ENCODE measurements at regions of chr5 and their contacts with region 1.

Region 1: DNA sequence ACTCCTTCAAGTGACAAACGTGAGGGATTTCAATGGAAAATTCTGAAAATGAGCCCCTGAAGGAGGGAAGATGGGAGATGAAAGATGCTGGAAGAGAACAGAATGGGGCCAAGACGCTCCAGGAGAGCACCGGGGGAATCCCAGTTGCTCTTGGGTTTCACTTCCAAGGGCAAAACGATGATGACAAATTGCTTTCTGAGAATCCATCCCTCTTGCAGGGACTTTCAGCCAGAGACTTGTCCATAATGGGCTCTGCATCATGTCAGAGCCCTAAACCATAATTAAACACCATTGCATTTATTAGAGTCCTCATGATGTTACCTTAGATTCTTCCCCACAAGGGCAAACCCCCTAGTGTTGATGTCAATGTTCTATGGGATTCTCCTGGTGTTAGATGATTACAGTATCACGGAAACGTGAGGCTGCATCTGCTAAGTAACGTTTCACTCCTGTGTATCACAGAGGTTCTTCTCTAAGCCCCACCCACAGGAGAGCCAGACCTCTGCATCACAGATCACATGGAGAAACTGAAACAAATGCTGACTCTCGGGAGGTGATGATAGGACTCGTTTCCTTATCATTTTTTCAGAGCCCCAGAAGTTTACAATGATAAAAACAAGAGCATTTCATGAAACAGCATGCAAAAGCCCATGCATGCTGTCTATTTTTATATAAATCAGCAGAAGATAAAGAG is 114.4 kb downstream of the TENT4A start:
- DNase-seq: peak; percentile 46
- H3K4me3 Mint-ChIP-seq: peak overlapping the region; percentile 76
- H3K27ac Mint-ChIP-seq: peak overlapping the region; percentile 84
- H3K4me1 Mint-ChIP-seq: peaks cover 56% of the 10 kb centered on the region
- H3K27me3 Mint-ChIP-seq: peaks cover 5% of the 10 kb centered on the region

Region 2: DNA sequence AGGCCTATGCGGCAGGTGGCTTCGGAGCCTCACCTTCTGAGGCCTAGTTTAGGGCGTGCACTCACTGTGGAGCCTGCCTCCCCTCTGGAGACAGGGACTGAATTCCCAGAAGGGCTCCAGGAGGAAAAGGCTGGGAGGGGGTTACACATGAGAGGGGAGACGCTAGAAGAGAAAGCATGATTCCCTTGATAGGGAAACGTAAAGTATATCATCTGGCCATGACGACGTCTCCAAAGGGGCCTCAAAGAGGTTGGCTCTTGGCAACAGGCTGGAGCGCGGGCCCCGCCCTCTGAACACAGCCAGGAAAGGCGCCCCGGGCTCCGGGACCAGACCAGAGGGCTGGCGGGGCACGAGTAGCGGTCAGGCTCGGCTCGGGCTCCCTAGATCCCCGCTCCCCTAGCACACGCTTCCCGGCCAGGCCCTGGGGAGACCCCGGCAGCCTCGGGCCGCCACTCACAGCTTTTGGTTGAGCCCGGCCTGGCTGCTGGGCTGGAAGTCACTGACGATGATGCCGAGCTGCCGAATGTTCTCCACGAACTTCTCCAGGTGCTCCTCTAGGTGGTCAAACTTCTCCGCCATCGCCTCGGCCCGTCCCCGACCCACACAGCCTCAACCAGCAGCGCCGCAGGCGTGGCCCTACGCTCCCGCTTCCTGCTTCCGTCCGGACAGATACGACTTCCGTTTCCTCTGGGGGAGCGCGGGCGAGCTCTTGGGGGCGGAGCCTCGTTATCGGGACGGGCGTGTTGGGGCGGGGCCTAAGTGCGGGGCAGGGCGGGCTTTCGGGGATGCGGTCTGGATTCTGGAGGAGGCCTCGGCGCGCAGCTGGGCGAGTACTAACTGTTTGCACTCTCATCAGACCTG is 449.5 kb before region 1 on chr5 and contains the start of gene MED10:
- intact Hi-C with region 1: loop called (anchors 5 kb)
- DNase-seq: peak; percentile 92
- H3K4me3 Mint-ChIP-seq: peak within 1 kb of the TSS; percentile 95
- H3K27ac Mint-ChIP-seq: peak within 1 kb of the TSS; percentile 97
- H3K4me1 Mint-ChIP-seq: peaks cover 57% of the 10 kb centered on the region
- H3K27me3 Mint-ChIP-seq: peaks cover 3% of the 10 kb centered on the region
- total RNA-seq, gene MED10: 60.2 and 67.1 TPM in 2 replicates

Region 3: GRCh38 chr5:6712577-6713275 is 114.9 kb before region 1 on chr5:
- intact Hi-C with region 1: loop called (anchors 1 kb)
- DNase-seq: peak; percentile 97
- H3K4me3 Mint-ChIP-seq: peak overlapping the region; percentile 88
- H3K27ac Mint-ChIP-seq: peak overlapping the region; percentile 95
- H3K4me1 Mint-ChIP-seq: peaks cover 41% of the 10 kb centered on the region
- H3K27me3 Mint-ChIP-seq: no peaks in the 10 kb centered on the region

Region 4: GRCh38 chr5:6849316-6850105 is 21.8 kb after region 1 on chr5:
- intact Hi-C with region 1: loop called (anchors 2 kb)
- DNase-seq: no peak
- H3K4me3 Mint-ChIP-seq: no peak overlapping the region
- H3K27ac Mint-ChIP-seq: no peak overlapping the region
- H3K4me1 Mint-ChIP-seq: peaks cover 5% of the 10 kb centered on the region
- H3K27me3 Mint-ChIP-seq: peaks cover 3% of the 10 kb centered on the region

Region 5: GRCh38 chr5:7131680-7132079 is 304.0 kb after region 1 on chr5:
- intact Hi-C with region 1: no loop called
- DNase-seq: no peak
- H3K4me3 Mint-ChIP-seq: no peak overlapping the region
- H3K27ac Mint-ChIP-seq: no peak overlapping the region
- H3K4me1 Mint-ChIP-seq: no peaks in the 10 kb centered on the region
- H3K27me3 Mint-ChIP-seq: no peaks in the 10 kb centered on the region

Region 6: GRCh38 chr5:7878381-7878873 is 1050.8 kb after region 1 on chr5:
- intact Hi-C with region 1: loop called (anchors 1 kb)
- DNase-seq: no peak
- H3K4me3 Mint-ChIP-seq: peak overlapping the region; percentile 17
- H3K27ac Mint-ChIP-seq: peak overlapping the region; percentile 81
- H3K4me1 Mint-ChIP-seq: peaks cover 61% of the 10 kb centered on the region
- H3K27me3 Mint-ChIP-seq: no peaks in the 10 kb centered on the region

Measured in activated T-helper 1 cell treated with anti-CD3 and anti-CD28 coated beads, Interleukin-12 subunit alpha, Interleukin-12 subunit beta, Interleukin-2, Interleukin-4 antibody, amounts not matched to agents 30 ng/mL and 10 ng/mL and 1 ng/mL, durations not matched to agents 14 hours and 24 hours and 36 hours (primary cell).